ENCODE measurements at regions of chr1 and their contacts with region 1.

Region 1: GRCh38 chr1:224503161-224504118 is 68.8 kb upstream of the WDR26 start:
- DNase-seq: peak; percentile 88 to 94
- H3K4me3 ChIP-seq: no peak overlapping the region; the same call in 1 of the 2 replicates
- H3K27ac ChIP-seq: peak overlapping the region; percentile 38
- H3K4me1 ChIP-seq: peaks cover 44% of the 10 kb centered on the region
- H3K27me3 ChIP-seq: no peaks in the 10 kb centered on the region
- CTCF ChIP-seq: no peak; the same call in 1 of the 2 replicates

Region 2: DNA sequence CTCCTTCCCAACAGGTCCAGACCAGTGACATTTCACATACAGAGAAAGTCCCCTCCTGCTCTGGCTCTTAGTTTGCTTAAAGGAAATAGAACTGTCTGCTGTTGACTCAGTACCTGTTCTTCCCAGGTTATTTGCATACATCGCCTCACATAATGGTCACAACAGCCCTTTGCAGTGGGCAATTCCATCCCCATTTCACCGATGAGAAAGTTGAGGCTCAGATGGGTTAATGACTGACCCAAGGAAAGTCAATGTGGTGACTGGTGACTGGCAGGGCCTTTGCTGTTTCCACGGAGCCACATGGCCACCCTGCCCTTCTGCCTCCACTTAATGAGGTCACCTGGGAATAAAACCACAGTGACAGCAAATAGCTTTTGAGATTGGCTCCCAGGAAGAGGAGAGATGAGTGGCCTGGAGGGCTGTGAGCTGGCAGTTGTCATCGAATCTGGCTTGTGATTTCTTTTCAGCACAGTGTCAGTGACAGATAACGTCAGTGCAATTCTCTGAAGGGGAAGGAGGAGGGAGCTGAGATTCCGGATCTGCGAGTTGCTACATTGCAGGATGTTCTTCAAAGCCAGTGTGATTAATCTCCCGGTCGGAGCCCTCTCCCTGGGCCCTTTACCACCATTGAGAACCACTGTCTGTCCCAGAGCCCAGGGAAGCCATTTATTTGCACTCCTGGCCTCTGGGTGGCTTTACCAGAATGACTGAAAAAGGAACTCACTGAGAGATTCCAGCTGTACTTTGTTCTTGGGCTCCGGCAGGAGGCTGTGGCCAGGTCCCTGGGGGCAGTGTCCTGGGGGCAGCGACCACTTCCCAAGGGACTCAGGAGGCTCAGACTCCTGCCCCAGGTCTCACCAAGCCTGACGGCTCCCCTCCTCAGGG is 229.8 kb after region 1 on chr1:
- CTCF ChIA-PET with region 1: no interaction called
- POLR2A ChIA-PET with region 1: no interaction called
- intact Hi-C with region 1: loop called (anchors 2 kb)
- DNase-seq: peak; percentile 73 to 94
- H3K4me3 ChIP-seq: peak overlapping the region; percentile 40; the same call in 1 of the 2 replicates
- H3K27ac ChIP-seq: peak overlapping the region; percentile 97
- H3K4me1 ChIP-seq: peaks cover 53% of the 10 kb centered on the region
- H3K27me3 ChIP-seq: no peaks in the 10 kb centered on the region
- CTCF ChIP-seq: no peak

Measured in PC-9 (cell line).